Heart left ventricle (tissue), 16 donors: ENCODE measurements at regions of chr5 and their contacts with region 1.

Region 1: DNA sequence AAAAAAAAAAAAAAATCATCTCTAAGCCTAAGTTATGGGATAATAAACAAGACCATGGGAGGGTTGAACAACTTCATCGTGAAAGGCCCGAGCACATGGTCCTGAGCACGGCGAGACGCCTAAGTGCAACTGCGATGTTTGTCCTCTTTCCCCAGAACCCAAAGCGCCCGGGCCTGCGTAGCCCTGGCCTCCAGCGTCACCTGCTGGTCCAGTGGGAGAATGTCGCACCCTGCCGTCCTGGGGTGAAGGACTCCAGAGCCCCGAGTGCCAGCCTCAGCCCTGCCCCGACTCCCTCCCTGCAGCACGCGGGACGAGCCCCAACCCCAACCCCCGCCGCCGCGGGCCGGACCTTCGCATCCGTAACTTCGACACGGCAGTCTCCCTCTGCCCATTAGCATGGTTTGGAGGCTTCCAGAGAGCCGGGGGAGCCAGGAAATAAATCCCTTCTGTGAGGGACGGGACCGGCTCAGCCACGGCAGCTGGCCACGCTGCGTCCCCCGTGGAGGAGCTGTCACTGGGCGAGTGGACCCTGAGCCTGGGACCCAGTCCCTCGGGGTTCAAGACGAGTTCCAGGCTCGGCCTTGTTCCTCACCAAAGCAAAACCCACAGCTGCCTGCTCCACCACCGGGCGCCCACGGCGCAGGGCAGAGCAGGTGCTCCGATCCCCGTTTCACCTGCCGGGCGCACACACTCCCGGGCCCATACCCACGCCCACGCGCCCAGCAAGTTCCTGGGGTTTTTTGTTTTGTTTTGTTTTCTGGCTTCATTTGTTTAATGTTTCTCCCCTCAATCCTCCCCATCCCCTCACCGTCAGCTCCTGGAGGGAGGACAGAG is 132.5 kb upstream of the HAND1 start:
- DNase-seq: peak; percentile 52 to 80 (median 74)
- ATAC-seq: peak; percentile 84 to 96 (median 91)
- H3K4me3 ChIP-seq: peak overlapping the region in 11 of 12 donors; percentile 24 to 48 (median 37)
- H3K27ac ChIP-seq: no peak overlapping the region
- H3K4me1 ChIP-seq: peaks cover 0 to 20% (median 10%) of the 10 kb centered on the region in 12 donors
- H3K27me3 ChIP-seq: peaks cover 10 to 57% (median 14%) of the 10 kb centered on the region in 9 donors
- CTCF ChIP-seq: peak; percentile 64 to 86 (median 76)
- POLR2A ChIP-seq: no peak

Region 2: GRCh38 chr5:154467655-154468354 is 142.7 kb before region 1 on chr5:
- intact Hi-C with region 1: loop called (anchors 1 to 2 kb)
- DNase-seq: peak; percentile 74 to 85 (median 77)
- ATAC-seq: peak; percentile 79 to 92 (median 92)
- H3K4me3 ChIP-seq: no peak overlapping the region
- H3K27ac ChIP-seq: peak overlapping the region in 3 of 12 donors; percentile 41 to 60 (median 48)
- H3K4me1 ChIP-seq: peaks cover 0 to 18% (median 4%) of the 10 kb centered on the region in 12 donors
- H3K27me3 ChIP-seq: peaks cover 2 to 43% (median 25%) of the 10 kb centered on the region in 9 donors
- CTCF ChIP-seq: peak; percentile 87 to 96 (median 95)
- POLR2A ChIP-seq: no peak

Region 3: GRCh38 chr5:154520861-154521453 is 89.6 kb before region 1 on chr5:
- intact Hi-C with region 1: loop called in 4 of 10 experiments (anchors 5 to 10 kb)
- DNase-seq: no peak
- ATAC-seq: no peak
- H3K4me3 ChIP-seq: no peak overlapping the region
- H3K27ac ChIP-seq: no peak overlapping the region
- H3K4me1 ChIP-seq: peaks cover 0 to 18% (median 4%) of the 10 kb centered on the region in 12 donors
- H3K27me3 ChIP-seq: peaks cover 0 to 41% (median 12%) of the 10 kb centered on the region in 9 donors
- CTCF ChIP-seq: peak; percentile 40 to 63 (median 44)
- POLR2A ChIP-seq: no peak